ENCODE measurements at regions of chr13 and their contacts with region 1.

Region 1: GRCh38 chr13:37526710-37527473 is 71.7 kb downstream of the POSTN start:
- DNase-seq: no peak

Region 2: DNA sequence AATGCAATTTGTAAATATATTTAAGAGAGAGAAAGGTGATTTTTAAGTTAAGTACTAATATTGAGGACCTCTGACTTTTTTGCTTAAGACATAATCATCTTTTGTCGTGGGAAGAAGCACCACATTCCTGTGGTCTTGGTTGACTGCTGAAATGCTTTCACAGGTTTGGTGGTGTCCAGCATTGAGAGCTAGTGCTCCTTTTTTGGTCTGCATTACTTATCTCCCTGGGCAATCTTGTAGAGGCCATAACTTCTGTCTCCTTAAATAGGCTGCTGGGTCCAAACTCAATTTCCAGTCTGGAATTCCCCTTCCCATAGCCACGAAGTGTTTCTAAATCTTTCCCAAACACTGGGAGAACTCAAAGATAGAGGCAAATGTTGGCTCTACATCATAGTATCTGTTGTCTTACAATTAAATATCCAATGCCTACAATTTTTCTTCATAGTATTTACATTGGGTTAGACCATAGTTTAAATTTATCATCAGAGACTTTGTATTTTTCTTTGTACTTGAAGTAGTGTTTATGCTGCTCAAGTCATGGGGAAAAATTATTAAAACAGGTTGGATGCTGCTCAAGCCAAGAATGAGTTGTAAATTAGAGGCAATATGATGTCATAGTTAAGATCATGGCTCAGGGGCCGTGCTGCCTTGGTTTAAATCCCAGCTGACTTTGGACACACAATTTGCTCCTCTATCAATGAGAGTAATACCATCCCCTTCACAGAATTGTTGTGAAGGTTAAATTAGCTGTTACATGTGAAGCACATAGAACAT is 34.0 kb before region 1 on chr13:
- intact Hi-C with region 1: loop called (anchors 5 kb)
- DNase-seq: no peak